Calu3 (cell line): ENCODE measurements at regions of chr1 and their contacts with region 1.

Region 1: GRCh38 chr1:37890378-37891014 is 31.1 kb upstream of the MTF1 start:
- DNase-seq: peak; percentile 6
- H3K4me3 Mint-ChIP-seq: no peak overlapping the region
- H3K27ac Mint-ChIP-seq: no peak overlapping the region
- H3K4me1 Mint-ChIP-seq: no peaks in the 10 kb centered on the region
- H3K27me3 Mint-ChIP-seq: no peaks in the 10 kb centered on the region
- CTCF ChIP-seq: peak; percentile 27

Region 2: GRCh38 chr1:37020653-37021277 is 869.7 kb before region 1 on chr1:
- CTCF ChIA-PET with region 1: no interaction called
- intact Hi-C with region 1: no loop called
- DNase-seq: peak; percentile 18
- H3K4me3 Mint-ChIP-seq: no peak overlapping the region
- H3K27ac Mint-ChIP-seq: no peak overlapping the region
- H3K4me1 Mint-ChIP-seq: no peaks in the 10 kb centered on the region
- H3K27me3 Mint-ChIP-seq: peaks cover 98% of the 10 kb centered on the region
- CTCF ChIP-seq: no peak

Region 3: DNA sequence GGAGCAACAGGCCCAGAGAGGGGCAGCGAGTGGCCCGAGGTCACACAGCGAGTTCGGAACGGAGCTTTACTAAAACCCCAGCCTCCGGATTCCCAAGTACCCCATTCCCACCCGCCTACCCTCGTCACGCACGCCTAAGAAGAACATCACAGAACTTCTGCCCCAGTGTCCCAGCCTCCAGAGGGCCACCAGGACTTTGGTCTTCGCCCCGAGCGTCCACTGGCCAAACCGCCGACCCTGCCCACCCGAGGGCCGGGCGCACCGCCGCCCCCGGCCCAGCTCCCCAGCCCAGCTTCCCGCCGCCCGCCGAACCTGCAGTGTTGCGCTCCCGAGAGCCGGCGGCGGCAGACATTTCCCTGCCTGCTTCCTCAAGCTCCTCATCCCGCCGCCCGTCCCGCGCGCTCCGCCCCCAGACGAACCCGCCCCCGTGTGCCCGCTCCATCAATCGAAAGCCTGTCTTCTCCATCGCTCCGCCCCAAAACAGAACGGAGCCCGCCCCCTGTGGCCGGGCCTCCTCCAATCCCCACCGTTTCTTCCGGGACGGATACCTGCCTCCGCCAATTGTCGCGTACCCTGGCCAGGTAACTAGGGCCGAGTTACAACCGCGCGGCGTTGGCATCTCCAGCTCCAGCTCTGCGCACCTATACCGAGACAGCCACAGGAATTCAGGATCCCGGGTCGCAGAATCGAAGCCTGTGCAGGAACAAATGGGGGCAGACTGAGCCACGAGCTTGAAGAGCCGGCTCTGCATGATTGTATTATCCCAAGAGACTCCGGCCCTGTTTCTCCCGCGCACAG is 41.1 kb after region 1 on chr1:
- CTCF ChIA-PET with region 1: no interaction called
- intact Hi-C with region 1: no loop called
- DNase-seq: peak; percentile 98
- H3K4me3 Mint-ChIP-seq: peak overlapping the region; percentile 94
- H3K27ac Mint-ChIP-seq: peak overlapping the region; percentile 76
- H3K4me1 Mint-ChIP-seq: peaks cover 20% of the 10 kb centered on the region
- H3K27me3 Mint-ChIP-seq: no peaks in the 10 kb centered on the region
- CTCF ChIP-seq: no peak

Region 4: GRCh38 chr1:37978541-37978940 is 88.0 kb after region 1 on chr1:
- CTCF ChIA-PET with region 1: no interaction called
- intact Hi-C with region 1: loop called (anchors 1 kb)
- DNase-seq: no peak
- H3K4me3 Mint-ChIP-seq: no peak overlapping the region
- H3K27ac Mint-ChIP-seq: no peak overlapping the region
- H3K4me1 Mint-ChIP-seq: no peaks in the 10 kb centered on the region
- H3K27me3 Mint-ChIP-seq: no peaks in the 10 kb centered on the region
- CTCF ChIP-seq: no peak